ENCODE measurements at regions of chr4 and their contacts with region 1.

Region 1: DNA sequence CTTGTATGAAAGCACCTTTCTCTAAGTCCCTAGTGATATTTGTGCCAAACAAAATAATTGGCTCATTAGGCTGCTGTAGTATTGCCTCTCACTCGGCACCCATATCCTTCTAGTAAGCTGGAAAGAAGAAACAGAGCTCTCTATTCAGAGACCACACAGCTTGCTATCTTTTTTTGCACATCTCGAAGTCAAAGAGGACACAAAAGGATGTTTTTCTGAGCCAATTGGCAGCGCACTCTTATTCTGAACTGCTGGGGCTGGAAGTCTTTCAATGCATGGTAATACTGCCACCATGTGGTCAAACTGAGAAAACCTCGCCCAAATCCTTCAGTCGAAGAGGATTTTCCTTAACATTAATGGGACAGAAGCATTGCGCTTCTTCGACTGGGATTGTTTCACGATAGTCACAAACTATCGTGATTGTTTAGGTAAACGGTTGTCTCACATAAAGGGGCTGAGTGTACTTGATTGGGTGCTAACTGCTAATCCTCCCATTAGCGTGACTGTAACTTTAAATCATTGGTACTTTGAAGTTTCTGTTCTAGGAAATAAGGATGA is 572.0 kb upstream of the LCORL start:
- DNase-seq: peak; percentile 4 to 74 (median 39)
- ATAC-seq: peak; percentile 69
- H3K4me3 ChIP-seq: no peak overlapping the region
- H3K4me3 Mint-ChIP-seq: no peak overlapping the region
- H3K27ac ChIP-seq: no peak overlapping the region
- H3K27ac Mint-ChIP-seq: no peak overlapping the region
- H3K4me1 ChIP-seq: no peaks in the 10 kb centered on the region
- H3K4me1 Mint-ChIP-seq: peaks cover 4% of the 10 kb centered on the region
- H3K27me3 ChIP-seq: no peaks in the 10 kb centered on the region
- H3K27me3 Mint-ChIP-seq: peaks cover 13% of the 10 kb centered on the region
- CTCF ChIP-seq: peak; percentile 81

Region 2: GRCh38 chr4:17544205-17544604 is 1049.3 kb before region 1 on chr4:
- CTCF ChIA-PET with region 1: interaction called, 12 read pairs
- POLR2A ChIA-PET with region 1: no interaction called
- intact Hi-C with region 1: loop called (anchors 1 kb)
- DNase-seq: no peak
- ATAC-seq: no peak
- H3K4me3 ChIP-seq: no peak overlapping the region
- H3K4me3 Mint-ChIP-seq: no peak overlapping the region
- H3K27ac ChIP-seq: no peak overlapping the region
- H3K27ac Mint-ChIP-seq: no peak overlapping the region
- H3K4me1 ChIP-seq: no peaks in the 10 kb centered on the region
- H3K4me1 Mint-ChIP-seq: peaks cover 3% of the 10 kb centered on the region
- H3K27me3 ChIP-seq: no peaks in the 10 kb centered on the region
- H3K27me3 Mint-ChIP-seq: peaks cover 9% of the 10 kb centered on the region
- CTCF ChIP-seq: no peak

Region 3: GRCh38 chr4:17636696-17637622 is 956.6 kb before region 1 on chr4:
- CTCF ChIA-PET with region 1: no interaction called
- POLR2A ChIA-PET with region 1: no interaction called
- intact Hi-C with region 1: loop called (anchors 5 kb)
- DNase-seq: peak; percentile 46 to 80 (median 72)
- ATAC-seq: peak; percentile 87
- H3K4me3 ChIP-seq: no peak overlapping the region
- H3K4me3 Mint-ChIP-seq: no peak overlapping the region
- H3K27ac ChIP-seq: no peak overlapping the region
- H3K27ac Mint-ChIP-seq: no peak overlapping the region
- H3K4me1 ChIP-seq: no peaks in the 10 kb centered on the region
- H3K4me1 Mint-ChIP-seq: peaks cover 2% of the 10 kb centered on the region
- H3K27me3 ChIP-seq: no peaks in the 10 kb centered on the region
- H3K27me3 Mint-ChIP-seq: no peaks in the 10 kb centered on the region
- CTCF ChIP-seq: peak; percentile 81

Region 4: DNA sequence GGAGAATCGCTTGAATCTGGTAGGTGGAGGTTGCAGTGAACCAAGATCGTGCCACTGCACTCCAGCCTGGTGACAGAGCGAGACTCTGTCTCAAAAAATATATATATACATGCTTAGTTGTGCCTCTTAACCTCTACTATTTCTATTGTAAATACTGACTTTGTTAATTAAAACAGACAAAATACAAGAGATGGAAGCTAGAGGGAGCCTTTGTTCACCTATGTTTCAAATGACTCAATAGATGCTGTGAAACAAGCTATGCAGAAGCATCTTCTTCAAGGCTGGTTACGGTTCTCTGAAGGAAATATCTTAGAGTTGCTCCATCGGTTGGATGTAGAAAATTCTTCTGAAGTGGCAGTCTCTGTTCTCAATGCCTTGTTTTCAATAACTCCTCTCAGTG is 776.5 kb before region 1 on chr4:
- CTCF ChIA-PET with region 1: interaction called, 35 read pairs
- POLR2A ChIA-PET with region 1: no interaction called
- intact Hi-C with region 1: loop called in 1 of 2 experiments (anchors 1 kb)
- DNase-seq: peak in 2 of 9 experiments; percentile 57 to 69
- ATAC-seq: peak; percentile 77
- H3K4me3 ChIP-seq: no peak overlapping the region
- H3K4me3 Mint-ChIP-seq: no peak overlapping the region
- H3K27ac ChIP-seq: no peak overlapping the region
- H3K27ac Mint-ChIP-seq: no peak overlapping the region
- H3K4me1 ChIP-seq: no peaks in the 10 kb centered on the region
- H3K4me1 Mint-ChIP-seq: peaks cover 6% of the 10 kb centered on the region
- H3K27me3 ChIP-seq: no peaks in the 10 kb centered on the region
- H3K27me3 Mint-ChIP-seq: no peaks in the 10 kb centered on the region
- CTCF ChIP-seq: peak; percentile 56

Region 5: DNA sequence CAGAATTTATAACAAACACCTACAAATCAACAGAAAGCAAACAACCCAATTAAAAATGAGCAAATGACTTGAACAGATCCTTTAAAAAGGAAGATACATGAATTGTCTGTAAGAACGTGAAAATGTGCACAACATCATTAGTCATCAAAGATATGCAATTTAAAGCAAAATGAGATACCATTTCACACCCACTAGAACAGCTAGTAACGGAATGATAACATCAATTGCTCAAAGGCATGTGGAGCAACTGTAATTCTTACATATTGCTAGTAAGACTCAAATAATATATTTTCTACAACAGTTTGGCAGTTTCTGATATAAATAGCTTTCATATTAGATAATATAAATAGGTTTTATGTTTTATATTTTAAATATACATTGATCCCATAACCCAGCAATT is 654.5 kb before region 1 on chr4:
- CTCF ChIA-PET with region 1: no interaction called
- POLR2A ChIA-PET with region 1: no interaction called
- intact Hi-C with region 1: loop called in 1 of 2 experiments (anchors 5 kb)
- DNase-seq: no peak
- ATAC-seq: no peak
- H3K4me3 ChIP-seq: no peak overlapping the region
- H3K4me3 Mint-ChIP-seq: no peak overlapping the region
- H3K27ac ChIP-seq: no peak overlapping the region
- H3K27ac Mint-ChIP-seq: no peak overlapping the region
- H3K4me1 ChIP-seq: no peaks in the 10 kb centered on the region
- H3K4me1 Mint-ChIP-seq: no peaks in the 10 kb centered on the region
- H3K27me3 ChIP-seq: no peaks in the 10 kb centered on the region
- H3K27me3 Mint-ChIP-seq: no peaks in the 10 kb centered on the region
- CTCF ChIP-seq: no peak

Region 6: DNA sequence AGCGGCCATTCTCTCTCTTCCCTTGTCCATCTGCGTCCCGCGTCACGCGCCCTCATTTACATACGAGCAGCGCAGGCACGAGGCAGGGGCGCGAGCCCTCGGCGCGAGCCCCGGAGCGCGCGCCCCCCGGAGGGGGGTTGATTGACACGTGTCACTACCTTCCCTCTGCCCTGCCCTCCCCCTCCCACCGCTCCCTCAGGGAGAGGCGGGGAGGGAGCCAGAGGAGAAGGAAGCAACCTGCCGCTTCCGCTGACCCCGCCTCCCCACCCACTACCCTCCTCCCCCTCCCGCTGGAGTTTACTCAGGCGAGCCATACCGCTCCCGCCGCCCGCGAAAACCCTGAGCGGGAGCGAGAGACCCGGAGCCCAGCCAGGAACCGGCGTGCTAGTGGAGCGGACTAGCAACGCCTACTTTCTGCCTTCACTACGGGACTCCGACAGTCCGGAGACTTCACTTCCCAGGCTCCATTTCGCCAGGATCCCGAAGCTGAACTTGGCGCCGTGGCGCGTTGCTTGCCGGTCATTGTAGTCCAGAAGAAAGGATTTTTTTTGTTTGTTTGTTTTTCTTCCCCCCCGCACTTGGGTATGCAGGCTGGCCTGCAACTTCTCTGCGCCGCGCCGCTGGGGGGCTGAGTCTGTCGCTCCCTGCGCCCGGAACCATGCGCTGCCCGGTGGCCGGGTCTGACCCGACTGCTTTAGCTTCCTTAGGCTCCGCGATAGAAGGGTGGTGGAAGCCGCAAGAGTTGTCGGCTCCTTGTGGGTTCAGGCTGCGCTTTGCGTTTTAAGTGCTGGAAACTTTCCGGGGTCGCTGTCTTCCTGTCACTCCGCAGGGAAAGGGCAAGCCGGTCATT is 571.6 kb before region 1 on chr4 and contains the start of gene LCORL:
- CTCF ChIA-PET with region 1: no interaction called
- POLR2A ChIA-PET with region 1: no interaction called
- intact Hi-C with region 1: loop called in 1 of 2 experiments (anchors 10 kb)
- DNase-seq: peak; percentile 75 to 95 (median 86)
- ATAC-seq: peak; percentile 83
- H3K4me3 ChIP-seq: peak within 1 kb of the TSS; percentile 63 to 98
- H3K4me3 Mint-ChIP-seq: peak within 1 kb of the TSS; percentile 95
- H3K27ac ChIP-seq: peak within 1 kb of the TSS; percentile 63 to 80
- H3K27ac Mint-ChIP-seq: peak within 1 kb of the TSS; percentile 89
- H3K4me1 ChIP-seq: peaks cover 18% of the 10 kb centered on the region
- H3K4me1 Mint-ChIP-seq: peaks cover 27% of the 10 kb centered on the region
- H3K27me3 ChIP-seq: no peaks in the 10 kb centered on the region
- H3K27me3 Mint-ChIP-seq: peaks cover 2% of the 10 kb centered on the region
- CTCF ChIP-seq: no peak
- total RNA-seq, gene LCORL: 5.3 to 7.5 TPM

Measured in CD8-positive, alpha-beta T cell (primary cell).